ENCODE measurements at regions of chr1 and their contacts with region 1.

Region 1: DNA sequence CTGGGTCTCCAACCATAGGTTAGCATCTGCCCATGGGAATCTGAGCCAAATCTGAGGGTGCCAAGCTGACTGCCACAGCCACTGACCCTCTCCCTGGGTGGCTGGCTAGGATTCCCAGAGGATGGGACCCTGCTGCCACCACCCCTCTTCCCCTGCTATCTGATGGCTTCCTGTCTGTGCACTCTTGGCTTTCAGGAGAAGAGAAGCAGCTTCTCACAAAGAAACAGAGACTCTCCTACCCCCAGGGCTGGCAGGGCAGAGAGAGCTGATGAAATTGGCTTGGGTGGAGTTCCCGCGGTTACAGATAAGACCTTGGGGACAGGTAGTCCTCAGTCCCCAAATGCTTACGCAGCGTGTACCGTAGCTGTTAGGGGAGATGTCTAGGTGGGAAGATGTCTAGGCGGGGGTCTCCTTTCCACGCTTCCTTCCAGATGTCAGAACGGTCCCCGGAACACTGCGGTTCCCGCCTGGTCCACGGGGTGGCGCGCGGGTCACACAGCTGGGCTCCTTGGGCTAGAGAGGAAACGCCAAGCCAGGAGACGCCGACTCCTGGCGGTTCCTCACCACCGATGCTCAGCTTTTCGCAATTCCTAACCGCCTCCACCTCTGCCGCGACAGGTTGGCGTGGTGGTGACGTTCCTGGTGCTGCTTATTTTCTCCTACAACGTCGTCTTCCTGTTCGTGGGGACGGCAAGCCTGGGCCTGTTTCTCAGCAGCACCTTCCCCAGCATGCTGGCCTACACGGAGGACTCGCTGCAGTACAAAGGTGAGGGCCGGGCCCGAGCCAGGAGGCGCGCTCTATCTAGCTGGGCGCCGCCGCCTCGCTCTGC is 40.1 kb downstream of the ELK4 start:
- DNase-seq: no peak
- H3K4me3 ChIP-seq: peak overlapping the region in 3 of 4 donors; percentile 37 to 62 (median 42)
- H3K27ac ChIP-seq: peak overlapping the region; percentile 36 to 79 (median 46)
- H3K4me1 ChIP-seq: peaks cover 6 to 46% (median 15%) of the 10 kb centered on the region in 3 donors
- H3K27me3 ChIP-seq: no peaks in the 10 kb centered on the region
- CTCF ChIP-seq: peak; percentile 95 to 100 (median 99)
- POLR2A ChIP-seq: no peak

Region 2: DNA sequence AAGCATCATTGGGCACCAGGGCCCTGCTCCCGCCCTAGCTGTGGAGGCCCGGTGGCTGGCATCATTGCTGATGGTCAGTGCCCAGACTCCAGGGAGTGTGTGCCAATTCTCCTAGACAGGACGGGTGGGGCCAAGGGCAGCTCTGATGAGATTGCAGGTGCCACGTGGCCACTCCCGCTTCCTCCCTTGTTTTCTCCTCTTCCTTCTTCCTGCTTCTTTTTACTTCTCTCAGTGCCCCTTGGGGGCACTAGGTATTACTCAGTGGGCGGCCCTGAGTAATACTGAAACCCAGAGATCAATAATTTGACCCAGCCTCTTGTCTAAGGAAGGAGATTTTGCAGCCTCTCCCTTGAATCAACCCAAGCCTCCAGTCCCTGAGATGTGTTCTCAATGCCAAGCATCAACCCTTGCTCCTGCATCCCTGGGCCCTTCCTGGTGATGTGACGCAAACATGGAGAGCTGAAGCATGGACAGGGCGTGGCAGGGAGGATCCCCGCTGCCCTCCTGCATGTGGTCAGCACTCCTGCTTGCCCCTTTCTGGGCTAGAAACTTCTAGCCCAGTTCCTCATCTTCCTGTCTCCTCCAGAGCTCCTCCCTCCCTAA is 54.9 kb before region 1 on chr1:
- intact Hi-C with region 1: loop called (anchors 10 kb)
- DNase-seq: no peak
- H3K4me3 ChIP-seq: no peak overlapping the region
- H3K27ac ChIP-seq: no peak overlapping the region
- H3K4me1 ChIP-seq: peaks cover 0 to 11% (median 0%) of the 10 kb centered on the region in 3 donors
- H3K27me3 ChIP-seq: peaks cover 0 to 10% (median 0%) of the 10 kb centered on the region in 4 donors
- CTCF ChIP-seq: no peak
- POLR2A ChIP-seq: no peak

Region 3: GRCh38 chr1:205636717-205637116 is 45.0 kb after region 1 on chr1:
- intact Hi-C with region 1: loop called (anchors 5 kb)
- DNase-seq: no peak
- H3K4me3 ChIP-seq: no peak overlapping the region
- H3K27ac ChIP-seq: peak overlapping the region in 2 of 4 donors; percentile 45 to 52
- H3K4me1 ChIP-seq: peaks cover 9 to 57% (median 19%) of the 10 kb centered on the region in 3 donors
- H3K27me3 ChIP-seq: no peaks in the 10 kb centered on the region
- CTCF ChIP-seq: no peak
- POLR2A ChIP-seq: no peak

Region 4: DNA sequence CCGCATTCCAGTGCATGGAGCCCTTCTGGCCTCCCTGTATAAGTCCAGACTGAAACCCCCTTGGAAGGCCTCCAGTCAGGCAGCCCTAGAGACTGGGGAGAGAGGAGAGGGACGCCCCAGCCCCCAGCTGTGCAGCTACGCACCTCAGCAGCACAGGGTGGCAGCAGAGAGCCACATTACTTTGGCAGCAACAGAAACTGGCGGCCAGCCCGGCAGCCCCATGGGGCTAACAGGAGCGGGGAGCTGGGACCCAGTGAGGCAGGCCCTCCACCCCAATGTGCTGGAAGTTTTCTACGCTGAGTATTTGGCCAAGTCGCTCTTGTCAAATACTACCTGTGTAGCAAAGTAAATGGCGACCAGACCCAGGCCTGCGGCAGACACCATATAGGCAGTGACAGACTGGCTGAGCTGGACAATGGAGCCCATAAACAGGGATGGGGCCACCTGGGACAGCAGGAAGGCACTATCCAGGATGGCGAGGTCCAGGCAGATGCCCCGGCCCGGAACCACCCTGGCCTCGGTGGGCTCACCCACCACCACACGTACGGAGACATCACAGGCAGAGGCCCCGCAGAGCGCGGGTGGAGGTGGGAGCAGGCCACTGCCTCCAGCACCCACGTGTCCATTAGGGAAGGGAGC is 67.3 kb after region 1 on chr1:
- intact Hi-C with region 1: loop called (anchors 5 kb)
- DNase-seq: no peak
- H3K4me3 ChIP-seq: no peak overlapping the region
- H3K27ac ChIP-seq: no peak overlapping the region
- H3K4me1 ChIP-seq: peaks cover 0 to 25% (median 3%) of the 10 kb centered on the region in 3 donors
- H3K27me3 ChIP-seq: peaks cover 0 to 7% (median 0%) of the 10 kb centered on the region in 4 donors
- CTCF ChIP-seq: peak; percentile 82 to 93 (median 86)
- POLR2A ChIP-seq: no peak

Measured in esophagus squamous epithelium (tissue), 5 donors.